GM12878 (cell line): ENCODE measurements at regions of chr1 and their contacts with region 1.

Region 1: GRCh38 chr1:12143631-12144155 is 23.1 kb upstream of the TNFRSF1B start:
- DNase-seq: no peak
- ATAC-seq: peak; percentile 27
- H3K4me3 ChIP-seq: no peak overlapping the region
- H3K27ac ChIP-seq: peak overlapping the region; percentile 60
- H3K4me1 ChIP-seq: peaks cover 52% of the 10 kb centered on the region
- H3K27me3 ChIP-seq: no peaks in the 10 kb centered on the region
- CTCF ChIP-seq: peak in 1 of 3 experiments; percentile 21; a peak in 2 of 6 replicates
- EP300 ChIP-seq: no peak
- POLR2A ChIP-seq: peak; percentile 52; the same call in 1 of the 2 replicates
- RAD21 ChIP-seq: no peak

Region 2: DNA sequence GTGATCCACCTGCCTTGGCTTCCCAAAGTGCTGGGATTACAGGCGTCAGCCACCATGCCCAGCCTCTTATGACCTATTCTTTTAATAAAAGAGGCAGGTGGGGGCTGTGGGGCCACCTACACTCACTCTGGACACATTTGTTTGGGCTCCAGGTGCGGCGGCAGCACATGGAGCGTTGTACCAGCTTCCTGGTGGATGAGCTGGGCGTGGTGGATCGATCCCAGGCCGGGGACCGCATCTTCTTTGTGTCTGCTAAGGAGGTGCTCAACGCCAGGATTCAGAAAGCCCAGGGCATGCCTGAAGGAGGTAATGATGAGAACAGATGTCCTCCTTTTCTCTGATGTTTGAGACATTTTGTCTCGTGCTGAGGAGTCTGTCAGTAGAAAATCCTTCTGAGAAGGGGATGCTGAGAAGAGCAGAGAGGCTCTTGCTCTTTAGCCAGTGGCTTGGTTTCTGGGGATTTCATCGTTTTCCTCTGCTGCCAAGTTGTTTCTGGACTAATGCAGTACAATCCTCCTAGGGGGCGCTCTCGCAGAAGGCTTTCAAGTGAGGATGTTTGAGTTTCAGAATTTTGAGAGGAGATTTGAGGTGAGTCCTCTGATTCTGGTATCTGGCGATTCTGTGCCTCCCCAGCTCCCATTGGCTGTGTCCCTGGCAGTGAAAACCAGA is 142.3 kb before region 1 on chr1:
- CTCF ChIA-PET with region 1: no interaction called
- POLR2A ChIA-PET with region 1: no interaction called
- RAD21 ChIA-PET with region 1: no interaction called
- SMC1A ChIA-PET with region 1: no interaction called
- in situ Hi-C with region 1: no loop called
- intact Hi-C with region 1: no loop called
- DNase-seq: no peak
- ATAC-seq: peak; percentile 27
- H3K4me3 ChIP-seq: no peak overlapping the region
- H3K27ac ChIP-seq: no peak overlapping the region
- H3K4me1 ChIP-seq: peaks cover 22% of the 10 kb centered on the region
- H3K27me3 ChIP-seq: no peaks in the 10 kb centered on the region
- CTCF ChIP-seq: peak; percentile 64 to 73 (median 67)
- EP300 ChIP-seq: no peak
- POLR2A ChIP-seq: no peak
- RAD21 ChIP-seq: peak; percentile 70

Region 3: DNA sequence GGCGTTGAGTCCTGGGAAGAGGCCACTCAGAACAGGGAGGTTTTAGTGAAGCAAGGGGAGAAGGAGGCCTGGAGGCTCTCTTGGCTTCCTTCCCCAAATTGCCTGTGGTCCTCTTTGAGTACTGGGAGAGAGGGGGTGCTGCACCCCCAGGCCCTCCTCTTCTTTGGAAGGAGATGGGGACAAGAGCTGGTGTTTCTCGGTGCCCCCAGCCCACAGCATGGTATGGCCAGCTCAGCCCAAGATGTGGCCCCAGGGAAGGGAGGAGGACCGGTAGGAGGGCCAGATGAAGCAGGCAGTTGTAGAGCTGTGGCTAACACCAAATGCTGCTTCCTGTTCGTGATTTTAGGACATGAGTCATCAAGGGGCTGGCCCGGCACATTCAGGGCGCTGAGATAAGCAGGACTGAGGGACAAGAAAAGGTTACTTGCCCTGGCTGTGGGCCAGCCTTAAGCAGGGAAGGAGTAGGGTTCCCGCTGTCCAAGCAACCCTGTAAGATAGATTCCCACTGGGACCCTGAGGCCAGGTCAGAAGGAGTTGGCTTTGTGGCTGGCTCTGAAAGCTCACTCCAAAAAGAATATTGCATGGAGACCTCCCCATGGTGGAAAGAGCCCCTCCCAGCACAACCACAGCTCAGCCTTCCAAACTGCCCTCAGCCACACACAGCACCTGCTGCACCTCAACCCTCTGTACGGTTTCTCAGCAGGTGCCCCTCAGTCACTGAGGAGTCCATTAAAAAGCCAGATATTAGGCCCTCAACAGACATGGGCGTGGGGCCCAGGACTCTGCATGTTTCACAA is 18.2 kb after region 1 on chr1:
- CTCF ChIA-PET with region 1: interaction called, 47 read pairs
- POLR2A ChIA-PET with region 1: interaction called, 166 read pairs
- RAD21 ChIA-PET with region 1: interaction called, 119 read pairs
- SMC1A ChIA-PET with region 1: interaction called, 347 read pairs
- in situ Hi-C with region 1: no loop called
- intact Hi-C with region 1: loop called (anchors 2 kb)
- DNase-seq: peak; percentile 88
- ATAC-seq: peak; percentile 87
- H3K4me3 ChIP-seq: no peak overlapping the region
- H3K27ac ChIP-seq: peak overlapping the region; percentile 89
- H3K4me1 ChIP-seq: peaks cover 79% of the 10 kb centered on the region
- H3K27me3 ChIP-seq: no peaks in the 10 kb centered on the region
- CTCF ChIP-seq: no peak
- EP300 ChIP-seq: peak; percentile 77 to 88; a peak in 3 of 4 replicates
- POLR2A ChIP-seq: peak; percentile 69
- RAD21 ChIP-seq: no peak

Region 4: GRCh38 chr1:12166834-12167492 is 23.3 kb after region 1 on chr1 and contains the start of gene TNFRSF1B:
- CTCF ChIA-PET with region 1: interaction called, 47 read pairs
- POLR2A ChIA-PET with region 1: interaction called, 166 read pairs
- RAD21 ChIA-PET with region 1: interaction called, 119 read pairs
- SMC1A ChIA-PET with region 1: interaction called, 347 read pairs
- in situ Hi-C with region 1: no loop called
- intact Hi-C with region 1: loop called (anchors 2 kb)
- DNase-seq: no peak
- ATAC-seq: peak; percentile 72
- H3K4me3 ChIP-seq: peak within 1 kb of the TSS; percentile 91
- H3K27ac ChIP-seq: peak within 1 kb of the TSS; percentile 82
- H3K4me1 ChIP-seq: peaks cover 47% of the 10 kb centered on the region
- H3K27me3 ChIP-seq: no peaks in the 10 kb centered on the region
- CTCF ChIP-seq: no peak
- EP300 ChIP-seq: no peak
- POLR2A ChIP-seq: peak; percentile 98
- RAD21 ChIP-seq: no peak
- polyA plus RNA-seq, gene TNFRSF1B: 10.1 to 11.6 TPM

Region 5: DNA sequence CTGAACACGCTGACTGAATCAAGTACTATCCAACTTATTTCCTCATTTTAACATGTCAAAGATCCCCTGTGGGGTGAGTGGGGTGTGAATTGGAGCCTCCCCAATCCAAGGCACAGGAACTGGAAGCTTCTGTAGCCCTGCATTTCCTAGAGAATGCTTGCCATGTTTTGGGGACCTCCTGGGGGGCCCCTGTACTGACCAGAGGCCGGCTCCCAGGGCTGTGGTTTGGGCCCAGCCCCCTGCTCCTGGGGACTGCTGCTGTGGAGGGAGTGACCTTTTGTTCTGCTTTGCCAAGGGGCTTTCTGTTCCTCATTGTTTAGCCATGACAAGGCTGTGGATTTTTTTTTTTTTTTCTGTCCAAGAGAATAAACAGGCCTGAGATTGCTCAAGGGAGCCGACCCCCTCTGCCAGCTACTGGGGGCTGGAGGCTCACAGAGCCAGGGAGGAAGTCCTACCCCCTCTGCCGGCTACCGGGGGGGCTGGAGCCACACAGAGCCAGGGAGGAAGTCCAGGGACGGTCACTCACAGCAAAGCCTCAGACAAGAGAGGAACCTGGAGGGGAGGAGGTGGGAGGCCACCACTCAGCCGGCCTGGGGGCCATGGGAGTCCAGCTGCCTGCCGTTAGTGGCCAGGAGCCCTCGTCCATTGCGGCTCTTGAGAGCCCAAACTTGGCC is 40.5 kb after region 1 on chr1:
- CTCF ChIA-PET with region 1: interaction called, 5 read pairs
- POLR2A ChIA-PET with region 1: interaction called, 14 read pairs
- RAD21 ChIA-PET with region 1: interaction called, 8 read pairs
- SMC1A ChIA-PET with region 1: interaction called, 347 read pairs
- in situ Hi-C with region 1: no loop called
- intact Hi-C with region 1: no loop called
- DNase-seq: no peak
- ATAC-seq: peak; percentile 76
- H3K4me3 ChIP-seq: no peak overlapping the region; the same call in 1 of the 2 replicates
- H3K27ac ChIP-seq: peak overlapping the region; percentile 47
- H3K4me1 ChIP-seq: peaks cover 20% of the 10 kb centered on the region
- H3K27me3 ChIP-seq: no peaks in the 10 kb centered on the region
- CTCF ChIP-seq: 0 out of 6 replicates have a peak, but pooled peaks of 1 of the 3 experiments have one; percentile 11
- EP300 ChIP-seq: no peak
- POLR2A ChIP-seq: no peak
- RAD21 ChIP-seq: 0 out of 2 replicates have a peak, but pooled peaks have one; percentile 29